ENCODE measurements at regions of chr20 and their contacts with region 1.

Region 1: DNA sequence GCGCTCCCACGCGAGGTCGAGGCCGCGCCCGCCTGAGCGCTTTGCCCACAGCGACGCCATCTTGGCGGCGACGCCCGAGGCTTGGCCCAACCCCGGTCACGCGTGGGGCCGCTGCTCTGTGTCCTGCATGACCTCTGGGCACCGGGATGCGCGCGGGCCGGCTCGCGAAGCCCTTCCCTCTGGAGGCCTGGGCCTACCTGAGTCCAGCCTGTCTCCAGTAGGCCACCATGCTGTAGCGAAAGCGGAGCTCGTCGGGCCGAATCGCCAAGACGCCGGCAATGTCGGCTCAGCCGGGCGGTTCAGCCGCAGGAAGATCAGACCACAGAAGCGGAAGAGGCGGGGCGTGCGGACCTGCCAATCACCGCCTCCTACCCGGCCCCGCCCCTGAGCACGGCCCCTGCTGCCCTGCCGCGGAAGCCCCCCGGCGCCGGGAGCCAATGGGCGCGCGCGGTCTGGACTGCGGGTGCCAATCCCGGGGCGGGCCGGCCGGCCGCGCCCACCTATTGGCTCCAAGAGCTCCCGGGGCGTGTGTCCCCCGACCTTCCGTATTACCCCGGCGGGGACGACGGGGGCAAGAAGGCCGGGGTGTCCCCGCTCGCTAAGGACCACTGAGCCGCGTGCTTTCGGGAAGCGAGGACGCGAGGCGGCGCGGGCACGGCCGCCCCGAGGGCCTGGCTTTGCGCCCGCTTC is at the start of gene ATP5F1E:
- DNase-seq: peak; percentile 97
- H3K4me3 ChIP-seq: peak within 1 kb of the TSS; percentile 92
- H3K27ac ChIP-seq: peak within 1 kb of the TSS; percentile 92
- H3K4me1 ChIP-seq: peaks cover 28% of the 10 kb centered on the region
- H3K27me3 ChIP-seq: no peaks in the 10 kb centered on the region
- CTCF ChIP-seq: no peak
- total RNA-seq, gene ATP5F1E: 73.7 and 76.8 TPM in 2 replicates

Region 2: DNA sequence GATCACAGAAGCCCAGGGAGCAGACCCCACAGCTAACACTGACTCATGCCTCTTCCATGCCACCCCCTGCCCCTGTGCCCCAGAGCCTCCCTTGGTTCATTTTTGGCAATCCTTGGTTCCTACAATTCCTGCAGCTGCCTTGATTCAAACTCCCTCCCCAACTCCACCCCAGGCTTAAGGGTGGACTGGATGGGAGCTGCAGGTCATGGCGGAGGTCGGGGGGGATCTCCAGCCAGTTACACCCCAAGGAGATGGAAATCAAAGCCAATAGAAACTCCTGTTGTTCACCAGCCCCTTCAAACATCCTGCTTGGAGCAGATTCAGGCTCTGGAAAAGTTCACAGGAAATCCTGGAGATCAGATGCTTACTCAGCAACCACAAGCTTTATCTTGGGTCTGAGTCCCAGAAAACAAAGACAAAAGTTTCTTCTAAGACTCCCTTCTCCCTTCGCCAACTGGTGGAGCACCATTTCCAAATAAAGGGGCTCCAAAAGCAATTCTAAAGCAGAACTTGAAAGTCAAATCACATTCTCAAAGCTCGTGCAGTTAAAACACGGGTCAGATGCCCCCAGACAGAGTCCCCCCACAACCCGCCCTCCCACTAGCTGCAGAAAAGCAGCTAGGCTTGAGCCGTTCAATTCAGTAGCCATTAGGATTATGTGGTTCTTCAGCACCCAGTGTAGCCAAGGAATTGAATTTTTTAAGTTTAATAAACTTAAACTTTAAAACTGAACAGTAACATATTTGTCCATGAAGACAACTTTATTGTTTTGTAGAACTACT is 953.2 kb before region 1 on chr20:
- CTCF ChIA-PET with region 1: no interaction called
- POLR2A ChIA-PET with region 1: interaction called, 14 read pairs
- intact Hi-C with region 1: no loop called
- DNase-seq: peak; percentile 28
- H3K4me3 ChIP-seq: no peak overlapping the region
- H3K27ac ChIP-seq: no peak overlapping the region
- H3K4me1 ChIP-seq: peaks cover 4% of the 10 kb centered on the region
- H3K27me3 ChIP-seq: no peaks in the 10 kb centered on the region
- CTCF ChIP-seq: no peak

Region 3: GRCh38 chr20:58890518-58891085 is 141.6 kb before region 1 on chr20:
- CTCF ChIA-PET with region 1: no interaction called
- POLR2A ChIA-PET with region 1: no interaction called
- intact Hi-C with region 1: loop called (anchors 5 kb)
- DNase-seq: peak; percentile 92
- H3K4me3 ChIP-seq: peak overlapping the region; percentile 83
- H3K27ac ChIP-seq: peak overlapping the region; percentile 95
- H3K4me1 ChIP-seq: peaks cover 25% of the 10 kb centered on the region
- H3K27me3 ChIP-seq: no peaks in the 10 kb centered on the region
- CTCF ChIP-seq: no peak

Region 4: GRCh38 chr20:58980700-58981627 is 51.2 kb before region 1 on chr20 and contains the start of gene NELFCD:
- CTCF ChIA-PET with region 1: no interaction called
- POLR2A ChIA-PET with region 1: no interaction called
- intact Hi-C with region 1: loop called (anchors 5 kb)
- DNase-seq: peak; percentile 92
- H3K4me3 ChIP-seq: peak within 1 kb of the TSS; percentile 83
- H3K27ac ChIP-seq: peak within 1 kb of the TSS; percentile 72
- H3K4me1 ChIP-seq: peaks cover 10% of the 10 kb centered on the region
- H3K27me3 ChIP-seq: no peaks in the 10 kb centered on the region
- CTCF ChIP-seq: no peak
- total RNA-seq, gene NELFCD: 164 and 174 TPM in 2 replicates